Endothelial cell of umbilical vein (primary cell): ENCODE measurements at regions of chr2 and their contacts with region 1.

Region 1: GRCh38 chr2:38947240-38948239 is 57.9 kb downstream of the ARHGEF33 start:
- DNase-seq: peak; percentile 76
- H3K4me3 ChIP-seq: no peak overlapping the region
- H3K27ac ChIP-seq: no peak overlapping the region
- H3K4me1 ChIP-seq: peaks cover 6% of the 10 kb centered on the region
- H3K27me3 ChIP-seq: peaks cover 0 to 3% of the 10 kb centered on the region in 2 experiments
- CTCF ChIP-seq: peak; percentile 66 to 80
- POLR2A ChIP-seq: no peak

Region 2: GRCh38 chr2:38935568-38936172 is 11.9 kb before region 1 on chr2:
- CTCF ChIA-PET with region 1: interaction called, 23 read pairs
- POLR2A ChIA-PET with region 1: no interaction called
- dilution Hi-C with region 1: no loop called
- intact Hi-C with region 1: no loop called
- DNase-seq: no peak
- H3K4me3 ChIP-seq: no peak overlapping the region
- H3K27ac ChIP-seq: no peak overlapping the region
- H3K4me1 ChIP-seq: no peaks in the 10 kb centered on the region
- H3K27me3 ChIP-seq: peaks cover under 1 to 2% of the 10 kb centered on the region in 2 experiments
- CTCF ChIP-seq: no peak
- POLR2A ChIP-seq: no peak

Region 3: DNA sequence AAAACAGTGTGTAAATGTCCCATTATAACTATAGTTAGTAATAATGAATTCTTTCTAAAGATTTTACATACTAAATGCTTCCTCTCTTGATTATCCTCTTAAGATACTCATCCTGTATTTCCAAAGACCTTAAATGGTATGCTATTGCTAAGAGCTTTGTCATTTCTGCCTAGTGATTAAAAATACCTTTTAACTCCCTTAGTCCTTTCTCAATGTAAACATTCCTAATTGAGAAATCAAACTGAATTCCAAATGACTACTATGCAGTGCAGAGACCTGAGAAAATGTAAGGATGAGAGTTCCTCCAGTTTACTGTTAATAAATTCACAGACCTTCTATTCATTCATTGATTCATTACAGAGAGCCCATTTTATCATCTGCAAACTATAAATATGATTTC is 86.4 kb after region 1 on chr2:
- CTCF ChIA-PET with region 1: interaction called, 11 read pairs
- POLR2A ChIA-PET with region 1: no interaction called
- dilution Hi-C with region 1: no loop called
- intact Hi-C with region 1: no loop called
- DNase-seq: no peak
- H3K4me3 ChIP-seq: no peak overlapping the region
- H3K27ac ChIP-seq: no peak overlapping the region
- H3K4me1 ChIP-seq: no peaks in the 10 kb centered on the region
- H3K27me3 ChIP-seq: no peaks in the 10 kb centered on the region
- CTCF ChIP-seq: no peak
- POLR2A ChIP-seq: no peak

Region 4: GRCh38 chr2:39227628-39228412 is 280.3 kb after region 1 on chr2:
- CTCF ChIA-PET with region 1: interaction called, 449 read pairs
- POLR2A ChIA-PET with region 1: interaction called, 4 read pairs
- dilution Hi-C with region 1: no loop called
- intact Hi-C with region 1: loop called (anchors 1 kb)
- DNase-seq: peak; percentile 81
- H3K4me3 ChIP-seq: peak overlapping the region in 1 of 3 experiments; percentile 49
- H3K27ac ChIP-seq: no peak overlapping the region
- H3K4me1 ChIP-seq: peaks cover 14% of the 10 kb centered on the region
- H3K27me3 ChIP-seq: no peaks in the 10 kb centered on the region
- CTCF ChIP-seq: peak; percentile 78 to 90
- POLR2A ChIP-seq: no peak

Region 5: GRCh38 chr2:39728941-39729351 is 781.4 kb after region 1 on chr2:
- CTCF ChIA-PET with region 1: interaction called, 26 read pairs
- POLR2A ChIA-PET with region 1: no interaction called
- dilution Hi-C with region 1: no loop called
- intact Hi-C with region 1: loop called (anchors 1 kb)
- DNase-seq: peak; percentile 17
- H3K4me3 ChIP-seq: no peak overlapping the region
- H3K27ac ChIP-seq: no peak overlapping the region
- H3K4me1 ChIP-seq: peaks cover 6% of the 10 kb centered on the region
- H3K27me3 ChIP-seq: peaks cover 0 to 2% of the 10 kb centered on the region in 2 experiments
- CTCF ChIP-seq: peak; percentile 77 to 88
- POLR2A ChIP-seq: no peak

Region 6: GRCh38 chr2:40127890-40128557 is 1180.5 kb after region 1 on chr2:
- CTCF ChIA-PET with region 1: no interaction called
- POLR2A ChIA-PET with region 1: no interaction called
- dilution Hi-C with region 1: no loop called
- intact Hi-C with region 1: no loop called
- DNase-seq: no peak
- H3K4me3 ChIP-seq: no peak overlapping the region
- H3K27ac ChIP-seq: no peak overlapping the region
- H3K4me1 ChIP-seq: no peaks in the 10 kb centered on the region
- H3K27me3 ChIP-seq: no peaks in the 10 kb centered on the region
- CTCF ChIP-seq: no peak
- POLR2A ChIP-seq: no peak